ENCODE measurements at regions of chr1 and their contacts with region 1.

Region 1: DNA sequence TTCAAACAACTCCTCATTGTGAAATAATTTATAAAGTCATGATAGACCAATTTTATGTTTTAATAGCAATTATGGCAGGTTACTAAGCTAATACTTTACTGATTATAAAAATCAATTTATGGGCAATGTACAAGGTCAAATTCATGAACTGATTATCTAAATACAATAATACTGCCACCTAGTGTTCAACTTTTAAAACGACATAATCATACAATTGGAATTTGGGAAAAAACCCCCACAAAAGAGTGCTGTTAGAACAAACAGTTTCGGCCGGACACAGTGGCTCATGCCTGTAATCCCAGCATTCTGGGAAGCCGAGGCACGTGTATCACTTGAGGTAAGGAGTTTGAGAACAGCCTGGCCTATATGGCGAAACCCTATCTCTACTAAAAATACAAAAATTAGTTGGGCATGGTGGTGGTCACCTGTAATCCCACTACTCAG is 14.0 kb downstream of the GTF2B start:
- DNase-seq: no peak
- H3K4me3 ChIP-seq: no peak overlapping the region
- CTCF ChIP-seq: peak; percentile 15

Region 2: DNA sequence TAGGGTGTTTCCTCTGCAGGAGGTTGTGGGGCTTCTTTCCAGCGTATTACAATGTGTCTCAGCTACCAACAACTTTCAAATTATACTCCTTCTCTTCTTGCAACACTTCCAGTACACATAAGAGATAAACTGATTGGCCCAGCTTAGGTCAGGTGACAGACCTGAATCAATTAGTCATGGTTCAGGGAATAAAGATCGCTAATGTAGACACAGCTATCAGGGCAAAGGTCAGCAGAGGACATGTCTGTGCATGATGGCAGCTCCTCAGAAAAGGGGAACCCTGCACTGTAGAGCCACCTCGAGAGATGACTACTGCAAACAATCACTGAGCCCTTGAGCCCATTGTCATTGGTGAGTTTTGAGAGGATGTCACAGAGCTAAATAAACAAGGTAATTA is 230.2 kb before region 1 on chr1:
- CTCF ChIA-PET with region 1: interaction called, 17 read pairs
- POLR2A ChIA-PET with region 1: no interaction called
- DNase-seq: no peak
- H3K4me3 ChIP-seq: no peak overlapping the region
- CTCF ChIP-seq: no peak

Region 3: DNA sequence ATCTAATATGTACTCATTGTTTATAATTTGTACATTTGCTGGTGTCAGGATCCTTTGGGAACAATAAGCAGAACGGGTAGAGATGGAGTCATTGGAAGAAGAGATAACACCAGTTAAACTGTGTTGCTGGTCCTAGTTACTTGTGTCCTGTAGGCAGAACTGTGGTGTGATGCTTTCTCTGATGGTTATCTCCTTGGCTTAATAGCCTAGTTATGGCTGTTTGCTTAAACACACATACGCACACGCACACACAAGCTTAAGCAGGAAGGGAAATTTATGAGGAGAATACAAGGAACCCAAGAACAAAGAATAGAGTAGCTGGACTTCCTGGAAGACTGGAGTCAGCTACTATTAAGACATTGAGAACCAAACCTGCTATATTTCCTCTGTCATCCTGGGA is 199.0 kb before region 1 on chr1:
- CTCF ChIA-PET with region 1: interaction called, 17 read pairs
- POLR2A ChIA-PET with region 1: no interaction called
- DNase-seq: no peak
- H3K4me3 ChIP-seq: no peak overlapping the region
- CTCF ChIP-seq: no peak

Region 4: GRCh38 chr1:88736639-88737248 is 140.7 kb before region 1 on chr1:
- CTCF ChIA-PET with region 1: interaction called, 114 read pairs
- POLR2A ChIA-PET with region 1: no interaction called
- DNase-seq: no peak
- H3K4me3 ChIP-seq: no peak overlapping the region
- CTCF ChIP-seq: peak; percentile 65

Measured in AG04449 (cell line).